ENCODE measurements at regions of chr3 and their contacts with region 1.

Region 1: GRCh38 chr3:132343018-132343612 is 25.9 kb downstream of the ACP3 start:
- DNase-seq: peak; percentile 26
- ATAC-seq: peak; percentile 76
- H3K4me3 Mint-ChIP-seq: no peak overlapping the region
- H3K27ac Mint-ChIP-seq: no peak overlapping the region
- H3K4me1 Mint-ChIP-seq: peaks cover 13% of the 10 kb centered on the region
- H3K27me3 Mint-ChIP-seq: no peaks in the 10 kb centered on the region
- CTCF ChIP-seq: peak; percentile 60

Region 2: DNA sequence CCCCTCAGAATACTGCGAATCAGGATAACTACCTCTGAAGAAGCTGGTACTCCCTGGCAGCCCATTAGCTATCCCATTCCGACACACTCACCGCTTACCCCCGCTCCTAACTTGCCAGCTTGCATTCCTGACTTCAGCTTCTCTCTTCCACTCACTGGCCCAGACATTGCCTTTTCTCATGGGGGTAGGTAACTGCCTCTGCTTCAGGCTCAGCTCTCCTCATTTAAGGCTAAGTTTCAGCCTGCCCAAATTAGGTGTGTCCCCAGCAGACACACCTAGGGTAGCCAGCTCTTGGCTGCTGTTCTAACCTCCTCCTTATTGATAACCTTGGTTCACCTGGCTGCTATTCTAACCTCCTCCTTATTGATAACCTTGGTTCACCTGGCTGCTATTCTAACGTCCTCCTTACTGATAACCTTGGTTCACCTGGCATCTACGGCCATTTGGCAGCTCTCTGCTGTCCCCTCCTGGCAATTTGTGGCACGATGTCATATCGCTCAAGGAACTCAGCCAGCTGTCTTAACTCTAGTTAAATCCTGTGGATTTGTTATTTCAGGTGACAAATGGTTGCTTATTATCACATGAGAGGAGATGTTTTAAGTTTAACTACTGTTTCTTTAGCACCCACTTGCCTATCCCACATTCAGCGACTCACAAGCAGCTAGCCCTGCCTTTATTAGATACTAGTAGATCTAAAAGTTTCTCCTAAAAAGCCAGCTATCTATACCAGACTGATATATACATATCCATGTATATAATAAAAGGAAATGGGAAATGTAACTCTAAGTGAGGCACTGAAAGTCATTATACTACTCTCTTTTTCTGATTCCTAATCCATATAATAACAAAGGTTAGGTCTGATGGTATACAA is 132.4 kb before region 1 on chr3:
- CTCF ChIA-PET with region 1: interaction called, 14 read pairs
- POLR2A ChIA-PET with region 1: no interaction called
- DNase-seq: peak; percentile 77
- ATAC-seq: peak; percentile 95
- H3K4me3 Mint-ChIP-seq: no peak overlapping the region
- H3K27ac Mint-ChIP-seq: no peak overlapping the region
- H3K4me1 Mint-ChIP-seq: peaks cover 18% of the 10 kb centered on the region
- H3K27me3 Mint-ChIP-seq: peaks cover 60% of the 10 kb centered on the region
- CTCF ChIP-seq: peak; percentile 67

Region 3: GRCh38 chr3:132253262-132253878 is 89.7 kb before region 1 on chr3:
- CTCF ChIA-PET with region 1: interaction called, 147 read pairs
- POLR2A ChIA-PET with region 1: no interaction called
- DNase-seq: no peak
- ATAC-seq: peak; percentile 74
- H3K4me3 Mint-ChIP-seq: no peak overlapping the region
- H3K27ac Mint-ChIP-seq: no peak overlapping the region
- H3K4me1 Mint-ChIP-seq: peaks cover 6% of the 10 kb centered on the region
- H3K27me3 Mint-ChIP-seq: peaks cover 3% of the 10 kb centered on the region; the same call in 1 of the 2 replicates
- CTCF ChIP-seq: peak; percentile 43

Region 4: DNA sequence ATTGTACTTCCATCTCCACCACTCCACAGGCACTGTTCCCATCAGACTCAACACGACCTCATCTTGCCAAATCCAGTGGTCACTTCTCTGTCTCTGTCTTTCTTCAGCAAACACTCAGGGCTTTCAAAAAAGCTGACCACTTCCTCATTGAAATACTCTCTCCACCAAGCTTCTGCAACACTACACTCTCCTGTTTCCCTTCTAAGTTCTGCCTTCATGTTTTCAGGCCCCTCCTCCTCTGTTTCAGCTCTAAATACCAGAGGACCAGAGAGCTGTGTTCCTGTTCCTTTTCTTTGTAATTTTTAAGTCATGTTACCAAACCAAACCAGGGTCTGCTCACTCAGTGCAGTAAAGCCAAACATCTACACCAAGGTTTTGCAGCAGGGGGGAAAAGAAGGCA is 59.7 kb before region 1 on chr3:
- CTCF ChIA-PET with region 1: interaction called, 42 read pairs
- POLR2A ChIA-PET with region 1: no interaction called
- DNase-seq: no peak
- ATAC-seq: peak; percentile 33
- H3K4me3 Mint-ChIP-seq: no peak overlapping the region
- H3K27ac Mint-ChIP-seq: peak overlapping the region; percentile 65
- H3K4me1 Mint-ChIP-seq: peaks cover 39% of the 10 kb centered on the region
- H3K27me3 Mint-ChIP-seq: no peaks in the 10 kb centered on the region
- CTCF ChIP-seq: no peak

Region 5: GRCh38 chr3:132332508-132332907 is 10.6 kb before region 1 on chr3:
- CTCF ChIA-PET with region 1: interaction called, 10 read pairs
- POLR2A ChIA-PET with region 1: no interaction called
- DNase-seq: no peak
- ATAC-seq: no peak
- H3K4me3 Mint-ChIP-seq: no peak overlapping the region
- H3K27ac Mint-ChIP-seq: no peak overlapping the region
- H3K4me1 Mint-ChIP-seq: 0 out of 2 replicates have a peak, but pooled peaks cover 3% of the 10 kb centered on the region
- H3K27me3 Mint-ChIP-seq: no peaks in the 10 kb centered on the region
- CTCF ChIP-seq: no peak

Region 6: GRCh38 chr3:132399054-132399929 is 56.2 kb after region 1 on chr3:
- CTCF ChIA-PET with region 1: interaction called, 185 read pairs
- POLR2A ChIA-PET with region 1: no interaction called
- DNase-seq: peak; percentile 44
- ATAC-seq: peak; percentile 81
- H3K4me3 Mint-ChIP-seq: no peak overlapping the region
- H3K27ac Mint-ChIP-seq: no peak overlapping the region
- H3K4me1 Mint-ChIP-seq: peaks cover 16% of the 10 kb centered on the region
- H3K27me3 Mint-ChIP-seq: no peaks in the 10 kb centered on the region
- CTCF ChIP-seq: peak; percentile 73